Left lung (tissue), 14 donors: ENCODE measurements at regions of chr2 and their contacts with region 1.

Region 1: GRCh38 chr2:227132986-227133385 is 31.0 kb downstream of the COL4A4 start:
- DNase-seq: no peak
- ATAC-seq: no peak
- H3K4me3 ChIP-seq: no peak overlapping the region
- H3K27ac ChIP-seq: no peak overlapping the region
- H3K4me1 ChIP-seq: no peaks in the 10 kb centered on the region
- H3K27me3 ChIP-seq: no peaks in the 10 kb centered on the region
- CTCF ChIP-seq: no peak

Region 2: DNA sequence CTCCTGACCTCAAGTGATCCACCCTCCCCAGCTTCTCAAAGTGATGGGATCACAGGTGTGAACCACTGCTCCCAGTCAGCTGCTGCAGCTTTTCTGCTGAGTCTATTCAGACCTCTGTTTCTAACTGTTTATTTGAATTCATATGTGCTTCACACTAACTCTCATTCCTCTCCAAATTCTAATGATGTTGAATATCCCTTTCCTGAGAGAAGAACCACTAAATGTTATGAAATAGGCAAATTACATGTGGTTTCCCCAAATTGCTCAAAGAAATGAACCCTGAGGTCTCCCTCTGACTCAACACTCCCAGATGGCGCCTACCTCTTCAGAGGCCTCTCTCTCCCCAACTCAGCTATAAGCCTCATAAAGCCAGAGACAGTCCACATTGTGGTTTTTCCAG is 431.9 kb before region 1 on chr2:
- intact Hi-C with region 1: no loop called
- DNase-seq: no peak
- ATAC-seq: peak; percentile 62
- H3K4me3 ChIP-seq: no peak overlapping the region
- H3K27ac ChIP-seq: no peak overlapping the region
- H3K4me1 ChIP-seq: no peaks in the 10 kb centered on the region
- H3K27me3 ChIP-seq: no peaks in the 10 kb centered on the region
- CTCF ChIP-seq: no peak

Region 3: GRCh38 chr2:227106845-227107759 is 25.9 kb before region 1 on chr2:
- intact Hi-C with region 1: no loop called
- DNase-seq: peak in 2 of 4 donors; percentile 57 to 79
- ATAC-seq: peak; percentile 68
- H3K4me3 ChIP-seq: no peak overlapping the region
- H3K27ac ChIP-seq: no peak overlapping the region
- H3K4me1 ChIP-seq: no peaks in the 10 kb centered on the region
- H3K27me3 ChIP-seq: no peaks in the 10 kb centered on the region
- CTCF ChIP-seq: peak; percentile 33 to 36

Region 4: DNA sequence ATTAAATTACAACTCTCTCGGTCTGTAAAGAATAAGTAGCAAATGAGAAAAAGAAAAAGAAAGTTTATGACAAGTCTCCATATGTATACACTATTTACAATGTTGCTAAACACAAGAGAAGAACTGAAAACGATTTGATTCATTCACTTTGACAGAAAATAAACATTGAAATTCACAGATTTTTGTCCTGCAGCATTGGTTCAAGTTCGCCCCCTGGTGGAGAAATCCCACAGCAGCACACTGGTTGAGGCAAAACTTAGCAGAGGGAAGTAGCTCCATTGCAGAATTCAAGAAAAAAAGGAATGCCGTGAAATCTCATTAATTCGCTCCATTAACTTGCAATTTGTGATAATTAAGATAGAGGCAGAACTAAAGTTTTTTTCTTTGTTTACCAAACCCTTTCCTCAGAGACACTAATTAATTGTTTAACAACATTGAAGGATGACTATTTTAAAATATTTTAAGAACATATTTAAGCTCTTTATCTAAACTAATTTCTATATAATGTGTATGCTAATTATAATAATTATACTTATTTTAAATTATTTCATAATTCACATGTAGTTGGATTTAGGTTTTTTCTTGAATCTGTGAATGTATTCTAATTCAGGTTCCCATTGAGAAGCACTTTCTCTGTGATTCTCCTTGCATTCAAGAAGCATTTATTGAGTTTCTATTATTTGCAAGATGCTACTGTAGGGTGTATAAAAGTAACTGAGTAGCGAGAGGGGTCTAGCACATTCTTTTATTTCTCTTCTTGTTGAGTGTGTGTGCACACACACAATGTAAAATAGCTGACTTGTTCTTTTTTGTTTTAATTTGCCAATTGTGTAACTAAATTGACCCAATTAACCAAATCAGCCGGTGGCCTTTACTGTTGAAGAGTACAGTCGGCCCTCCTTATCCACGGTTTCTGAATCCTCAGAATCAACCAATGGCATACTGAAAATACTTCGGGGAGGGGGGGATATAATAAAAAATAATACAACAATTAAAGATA is 105.6 kb after region 1 on chr2:
- intact Hi-C with region 1: loop called in 1 of 2 experiments (anchors 10 kb)
- DNase-seq: peak in 3 of 4 donors; percentile 56 to 71 (median 60)
- ATAC-seq: peak; percentile 85
- H3K4me3 ChIP-seq: no peak overlapping the region
- H3K27ac ChIP-seq: no peak overlapping the region
- H3K4me1 ChIP-seq: no peaks in the 10 kb centered on the region
- H3K27me3 ChIP-seq: no peaks in the 10 kb centered on the region
- CTCF ChIP-seq: peak; percentile 89 to 91